Activated T-helper 2 cell treated with anti-CD3 and anti-CD28 coated beads, Interferon-gamma antibody, Interleukin-2, Interleukin-4, amounts not matched to agents 10 μg/mL and 5 μg/mL and 100 μg/mL, durations not matched to agents 14 hours and 24 hours and 36 hours (primary cell): ENCODE measurements at regions of chr6 and their contacts with region 1.

Region 1: GRCh38 chr6:158220786-158221442 is 52.8 kb downstream of the GTF2H5 start:
- DNase-seq: peak; percentile 61
- H3K4me3 Mint-ChIP-seq: no peak overlapping the region
- H3K27ac Mint-ChIP-seq: no peak overlapping the region
- H3K4me1 Mint-ChIP-seq: no peaks in the 10 kb centered on the region
- H3K27me3 Mint-ChIP-seq: no peaks in the 10 kb centered on the region

Region 2: GRCh38 chr6:158387036-158387435 is 166.1 kb after region 1 on chr6:
- intact Hi-C with region 1: loop called (anchors 2 kb)
- DNase-seq: no peak
- H3K4me3 Mint-ChIP-seq: no peak overlapping the region
- H3K27ac Mint-ChIP-seq: no peak overlapping the region
- H3K4me1 Mint-ChIP-seq: peaks cover 3% of the 10 kb centered on the region
- H3K27me3 Mint-ChIP-seq: no peaks in the 10 kb centered on the region

Region 3: DNA sequence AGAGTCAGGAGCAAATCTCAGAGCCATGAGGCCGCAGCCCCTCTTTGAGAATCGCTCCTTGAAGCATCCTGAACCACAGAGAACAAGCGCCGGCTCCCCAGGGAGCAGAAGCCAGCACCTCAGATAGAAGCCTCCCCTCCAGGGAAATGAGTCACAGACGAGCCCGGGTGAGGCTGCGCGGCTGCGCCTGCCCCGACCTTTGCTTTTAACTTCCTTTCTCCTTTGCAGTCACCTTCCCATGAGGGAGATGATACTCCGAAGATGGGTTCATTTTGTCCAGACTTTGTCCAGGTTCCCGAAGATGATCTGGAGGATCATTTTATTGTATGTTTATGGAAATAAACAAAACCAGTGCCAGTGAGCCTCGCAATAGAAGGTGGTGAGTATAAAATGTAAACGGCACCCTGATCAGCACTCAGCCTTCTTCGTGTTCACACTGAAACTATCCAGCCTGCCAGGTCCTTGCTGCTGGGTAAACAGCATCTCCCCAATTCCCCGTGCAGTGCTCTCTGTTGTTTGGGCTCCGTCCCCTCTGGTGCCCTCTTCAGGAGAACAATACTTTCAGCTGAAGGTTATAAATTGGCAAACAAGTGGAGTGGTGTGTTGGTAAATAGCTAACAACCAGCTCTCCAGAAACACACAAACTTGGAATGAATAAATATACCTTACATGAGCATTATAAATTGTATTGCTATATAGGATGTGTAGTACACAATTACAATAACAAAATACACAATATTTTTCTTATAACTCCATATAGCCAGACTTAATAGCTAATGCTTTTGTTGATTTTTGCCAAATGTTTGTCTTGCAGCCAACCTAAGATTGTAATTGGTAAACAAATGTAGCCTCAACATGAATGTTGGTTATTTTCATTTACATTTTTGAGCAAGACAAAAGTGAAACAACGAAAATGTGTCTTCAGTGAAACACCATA is 297.5 kb after region 1 on chr6:
- intact Hi-C with region 1: loop called (anchors 1 kb)
- DNase-seq: peak; percentile 66
- H3K4me3 Mint-ChIP-seq: peak overlapping the region; percentile 81
- H3K27ac Mint-ChIP-seq: peak overlapping the region; percentile 72
- H3K4me1 Mint-ChIP-seq: peaks cover 32% of the 10 kb centered on the region
- H3K27me3 Mint-ChIP-seq: peaks cover 13% of the 10 kb centered on the region

Region 4: DNA sequence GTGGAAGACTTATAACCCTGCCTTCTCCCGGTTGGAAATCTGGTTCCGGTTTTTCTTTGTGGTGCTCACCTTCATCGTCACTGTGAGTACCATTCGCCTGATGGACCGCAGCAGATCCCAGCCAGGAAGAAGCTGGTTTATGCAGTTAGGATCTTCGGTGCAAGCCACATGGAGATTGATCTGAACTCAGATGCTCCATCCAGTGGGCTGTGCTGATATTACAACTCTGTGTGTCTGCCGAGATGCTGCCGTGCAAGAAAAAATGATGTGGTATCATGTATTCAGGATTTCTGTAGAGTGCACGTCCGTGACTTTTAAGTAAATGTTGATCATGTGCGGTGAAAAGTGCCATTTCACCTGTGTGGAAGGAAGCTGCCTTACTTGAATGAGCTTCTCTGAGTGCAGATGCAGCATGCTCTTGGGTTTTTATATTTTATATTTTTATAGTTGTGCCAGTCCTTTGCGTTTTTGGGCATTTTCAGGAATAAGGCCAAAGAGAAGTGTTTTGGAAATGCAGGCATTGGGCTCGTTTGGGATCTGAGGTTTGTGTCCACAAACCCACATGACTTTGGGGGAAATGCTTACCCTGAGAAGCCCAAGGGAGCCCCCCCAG is 384.5 kb after region 1 on chr6:
- intact Hi-C with region 1: loop called (anchors 1 kb)
- DNase-seq: peak; percentile 32
- H3K4me3 Mint-ChIP-seq: no peak overlapping the region
- H3K27ac Mint-ChIP-seq: peak overlapping the region; percentile 28
- H3K4me1 Mint-ChIP-seq: peaks cover 7% of the 10 kb centered on the region
- H3K27me3 Mint-ChIP-seq: no peaks in the 10 kb centered on the region